Caco-2 (cell line): ENCODE measurements at regions of chr1 and their contacts with region 1.

Region 1: GRCh38 chr1:9539165-9539828 is at the start of gene SLC25A33:
- DNase-seq: peak; percentile 97 to 98
- H3K4me3 ChIP-seq: peak within 1 kb of the TSS; percentile 95
- H3K4me3 Mint-ChIP-seq: peak within 1 kb of the TSS; percentile 86
- H3K27ac Mint-ChIP-seq: peak within 1 kb of the TSS; percentile 82
- H3K4me1 ChIP-seq: peaks cover 18% of the 10 kb centered on the region
- H3K4me1 Mint-ChIP-seq: peaks cover 12% of the 10 kb centered on the region
- H3K27me3 ChIP-seq: no peaks in the 10 kb centered on the region
- H3K27me3 Mint-ChIP-seq: no peaks in the 10 kb centered on the region
- CTCF ChIP-seq: no peak
- total RNA-seq, gene SLC25A33: 9.9 and 11.2 TPM in 2 replicates

Region 2: GRCh38 chr1:9553736-9554144 is 14.4 kb after region 1 on chr1:
- CTCF ChIA-PET with region 1: no interaction called
- POLR2A ChIA-PET with region 1: interaction called, 10 read pairs
- intact Hi-C with region 1: no loop called
- DNase-seq: peak; percentile 60 to 69
- H3K4me3 ChIP-seq: no peak overlapping the region
- H3K4me3 Mint-ChIP-seq: no peak overlapping the region
- H3K27ac Mint-ChIP-seq: no peak overlapping the region
- H3K4me1 ChIP-seq: peaks cover 5% of the 10 kb centered on the region; the same call in 1 of the 2 replicates
- H3K4me1 Mint-ChIP-seq: peaks cover 4% of the 10 kb centered on the region
- H3K27me3 ChIP-seq: no peaks in the 10 kb centered on the region
- H3K27me3 Mint-ChIP-seq: no peaks in the 10 kb centered on the region
- CTCF ChIP-seq: no peak

Region 3: GRCh38 chr1:9629445-9630201 is 90.3 kb after region 1 on chr1:
- CTCF ChIA-PET with region 1: no interaction called
- POLR2A ChIA-PET with region 1: no interaction called
- intact Hi-C with region 1: no loop called
- DNase-seq: no peak
- H3K4me3 ChIP-seq: no peak overlapping the region
- H3K4me3 Mint-ChIP-seq: no peak overlapping the region
- H3K27ac Mint-ChIP-seq: no peak overlapping the region
- H3K4me1 ChIP-seq: peaks cover 8% of the 10 kb centered on the region; the same call in 1 of the 2 replicates
- H3K4me1 Mint-ChIP-seq: no peaks in the 10 kb centered on the region
- H3K27me3 ChIP-seq: no peaks in the 10 kb centered on the region; the same call in 1 of the 2 replicates
- H3K27me3 Mint-ChIP-seq: peaks cover 3% of the 10 kb centered on the region
- CTCF ChIP-seq: no peak